Activated CD4-positive, alpha-beta memory T cell treated with anti-CD3 and anti-CD28 coated beads for 36 hours (primary cell): ENCODE measurements at regions of chr11 and their contacts with region 1.

Region 1: DNA sequence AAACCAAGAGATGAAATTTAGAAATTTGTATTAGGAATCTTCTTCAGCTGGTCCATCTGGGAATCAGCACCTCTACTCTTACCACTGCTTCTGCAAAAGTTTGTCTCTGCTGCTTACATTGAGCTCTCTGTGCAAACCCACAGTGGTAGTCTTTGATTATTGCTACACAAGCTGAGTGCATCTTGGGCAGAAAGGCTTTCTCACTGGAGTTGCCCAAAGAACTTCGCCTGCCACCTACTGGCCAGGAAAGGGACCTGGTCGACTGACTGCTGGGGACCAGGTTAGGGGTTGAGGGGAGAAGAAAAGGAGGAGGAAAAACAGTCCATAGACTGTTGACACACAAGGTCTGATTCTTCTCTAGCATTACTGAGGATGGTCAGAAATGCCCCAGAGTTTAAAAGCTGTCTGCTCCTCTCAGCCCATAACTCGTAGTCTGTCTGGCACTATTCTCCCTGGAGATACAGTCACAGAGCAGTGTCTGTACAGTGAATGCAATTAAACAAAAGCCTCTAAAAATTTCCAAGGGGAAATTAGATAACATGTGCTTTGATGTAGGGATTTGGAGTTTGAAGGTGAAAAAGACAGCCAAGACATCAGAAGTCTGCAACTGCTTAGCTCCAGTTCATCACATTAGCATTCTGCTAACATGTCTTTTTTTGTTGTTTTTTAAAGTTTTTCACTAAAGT is 215.0 kb upstream of the CTSC start:
- DNase-seq: peak; percentile 73
- H3K4me3 Mint-ChIP-seq: no peak overlapping the region
- H3K27ac Mint-ChIP-seq: no peak overlapping the region
- H3K4me1 Mint-ChIP-seq: no peaks in the 10 kb centered on the region
- H3K27me3 Mint-ChIP-seq: peaks cover 5% of the 10 kb centered on the region

Region 2: GRCh38 chr11:88016392-88017170 is 535.9 kb before region 1 on chr11:
- CTCF ChIA-PET with region 1: interaction called, 58 read pairs
- POLR2A ChIA-PET with region 1: no interaction called
- intact Hi-C with region 1: no loop called
- DNase-seq: peak; percentile 64
- H3K4me3 Mint-ChIP-seq: no peak overlapping the region
- H3K27ac Mint-ChIP-seq: no peak overlapping the region
- H3K4me1 Mint-ChIP-seq: no peaks in the 10 kb centered on the region
- H3K27me3 Mint-ChIP-seq: no peaks in the 10 kb centered on the region

Region 3: DNA sequence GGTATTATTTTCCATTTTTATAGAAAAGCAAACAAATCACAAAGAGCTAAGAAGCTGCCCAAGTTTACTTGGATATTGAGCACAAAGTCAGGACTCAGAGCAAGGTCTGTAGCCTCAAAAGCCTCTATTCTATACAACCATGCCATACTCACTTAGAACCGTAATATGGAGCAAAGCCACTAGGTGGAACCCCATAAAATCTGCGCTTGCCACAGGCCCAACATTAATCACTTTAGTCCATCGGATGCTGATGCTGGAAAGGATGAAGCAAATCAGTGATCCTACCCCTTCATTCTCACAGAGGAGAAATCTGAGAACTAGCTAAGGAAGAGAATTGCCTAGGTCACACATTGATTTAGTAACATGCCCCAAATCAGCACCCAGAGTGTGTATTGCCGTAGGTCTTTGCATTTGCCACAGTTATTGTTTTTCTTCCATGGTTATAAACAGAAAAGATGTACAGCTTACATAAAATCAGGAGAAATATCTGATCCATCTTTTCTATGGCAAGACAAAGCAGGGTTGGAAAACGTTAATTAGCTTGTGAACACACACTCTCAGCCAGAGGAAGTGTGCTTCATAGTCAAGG is 320.5 kb before region 1 on chr11:
- CTCF ChIA-PET with region 1: interaction called, 22 read pairs
- POLR2A ChIA-PET with region 1: no interaction called
- intact Hi-C with region 1: no loop called
- DNase-seq: peak; percentile 13
- H3K4me3 Mint-ChIP-seq: no peak overlapping the region
- H3K27ac Mint-ChIP-seq: no peak overlapping the region
- H3K4me1 Mint-ChIP-seq: no peaks in the 10 kb centered on the region
- H3K27me3 Mint-ChIP-seq: no peaks in the 10 kb centered on the region

Region 4: DNA sequence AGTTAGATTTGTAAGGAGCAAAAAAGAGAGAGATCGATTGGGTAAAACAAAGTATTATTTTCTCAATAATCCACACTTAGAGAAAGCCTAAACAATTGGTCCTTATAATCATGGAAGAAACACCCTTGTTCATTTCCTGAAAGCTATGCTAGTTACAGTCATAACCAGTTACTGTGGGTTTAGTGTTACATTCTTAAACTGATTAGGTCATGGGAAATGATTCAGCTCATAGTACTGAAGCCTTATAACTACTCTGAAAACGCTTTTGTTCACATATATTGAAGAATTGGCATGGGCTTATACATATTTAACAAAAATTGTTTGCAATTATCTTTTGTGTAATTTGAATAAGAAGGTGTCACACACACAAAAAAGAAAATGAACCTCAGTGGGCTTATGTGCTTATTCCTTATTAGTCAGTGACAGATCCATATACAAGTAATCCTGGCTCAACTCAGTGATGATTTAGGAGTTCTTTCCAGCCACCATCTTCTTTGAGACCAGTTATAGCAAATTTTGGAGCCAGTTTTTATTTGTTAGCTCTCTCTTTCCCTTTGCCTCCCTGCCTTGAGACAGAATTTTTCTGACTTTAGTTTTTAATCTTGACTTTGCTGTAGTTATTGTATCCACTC is 16.5 kb before region 1 on chr11:
- CTCF ChIA-PET with region 1: interaction called, 24 read pairs
- POLR2A ChIA-PET with region 1: no interaction called
- intact Hi-C with region 1: no loop called
- DNase-seq: no peak
- H3K4me3 Mint-ChIP-seq: no peak overlapping the region
- H3K27ac Mint-ChIP-seq: no peak overlapping the region
- H3K4me1 Mint-ChIP-seq: peaks cover 19% of the 10 kb centered on the region
- H3K27me3 Mint-ChIP-seq: peaks cover 8% of the 10 kb centered on the region